Dorsolateral prefrontal cortex (tissue), 120 donors: ENCODE measurements at regions of chr19 and their contacts with region 1.

Region 1: GRCh38 chr19:41397086-41398049 is at the starts of genes BCKDHA and EXOSC5:
- DNase-seq: peak; percentile 98 to 99 (median 99)
- H3K4me3 ChIP-seq: peak within 1 kb of the TSS; percentile 71 to 100 (median 97)
- H3K27ac ChIP-seq: peak within 1 kb of the TSS; percentile 79 to 99 (median 96)
- H3K27me3 ChIP-seq: no peaks in the 10 kb centered on the region
- CTCF ChIP-seq: peak in 30 of 56 donors; percentile 3 to 60 (median 22)
- total RNA-seq, gene BCKDHA: 7.7 to 38.9 (median 20.1) TPM
- total RNA-seq, gene EXOSC5: 11.5 to 29.1 (median 18.2) TPM

Region 2: GRCh38 chr19:41263850-41264580 is 133.4 kb before region 1 on chr19 and contains the start of gene HNRNPUL1:
- intact Hi-C with region 1: loop called in 1 of 2 experiments (anchors 1 kb)
- DNase-seq: peak; percentile 96 to 99 (median 98)
- H3K4me3 ChIP-seq: peak within 1 kb of the TSS; percentile 67 to 100 (median 97)
- H3K27ac ChIP-seq: peak within 1 kb of the TSS; percentile 87 to 100 (median 98)
- H3K27me3 ChIP-seq: no peaks in the 10 kb centered on the region
- CTCF ChIP-seq: peak in 40 of 56 donors; percentile 13 to 54 (median 32)
- total RNA-seq, gene HNRNPUL1: 92.7 to 156 (median 118) TPM

Region 3: GRCh38 chr19:41278478-41278877 is 118.9 kb before region 1 on chr19:
- intact Hi-C with region 1: no loop called
- DNase-seq: no peak
- H3K4me3 ChIP-seq: no peak overlapping the region
- H3K27ac ChIP-seq: no peak overlapping the region
- H3K27me3 ChIP-seq: no peaks in the 10 kb centered on the region
- CTCF ChIP-seq: no peak

Region 4: GRCh38 chr19:41363753-41364523 is 33.4 kb before region 1 on chr19 and contains the start of gene B9D2:
- intact Hi-C with region 1: loop called (anchors 1 to 2 kb)
- DNase-seq: peak; percentile 95 to 98 (median 98)
- H3K4me3 ChIP-seq: peak within 1 kb of the TSS; percentile 52 to 98 (median 82)
- H3K27ac ChIP-seq: peak within 1 kb of the TSS; percentile 80 to 100 (median 98)
- H3K27me3 ChIP-seq: no peaks in the 10 kb centered on the region
- CTCF ChIP-seq: peak in 13 of 56 donors; percentile 6 to 42 (median 27)
- total RNA-seq, gene B9D2: 3.0 to 12.9 (median 6.6) TPM

Region 5: GRCh38 chr19:41431426-41432386 is 34.3 kb after region 1 on chr19:
- intact Hi-C with region 1: loop called (anchors 5 kb)
- DNase-seq: peak in 2 of 10 donors; percentile 17 to 26
- H3K4me3 ChIP-seq: no peak overlapping the region
- H3K27ac ChIP-seq: peak overlapping the region in 18 of 59 donors; percentile 3 to 49 (median 25)
- H3K27me3 ChIP-seq: no peaks in the 10 kb centered on the region
- CTCF ChIP-seq: peak in 36 of 56 donors; percentile 8 to 44 (median 26)

Region 6: DNA sequence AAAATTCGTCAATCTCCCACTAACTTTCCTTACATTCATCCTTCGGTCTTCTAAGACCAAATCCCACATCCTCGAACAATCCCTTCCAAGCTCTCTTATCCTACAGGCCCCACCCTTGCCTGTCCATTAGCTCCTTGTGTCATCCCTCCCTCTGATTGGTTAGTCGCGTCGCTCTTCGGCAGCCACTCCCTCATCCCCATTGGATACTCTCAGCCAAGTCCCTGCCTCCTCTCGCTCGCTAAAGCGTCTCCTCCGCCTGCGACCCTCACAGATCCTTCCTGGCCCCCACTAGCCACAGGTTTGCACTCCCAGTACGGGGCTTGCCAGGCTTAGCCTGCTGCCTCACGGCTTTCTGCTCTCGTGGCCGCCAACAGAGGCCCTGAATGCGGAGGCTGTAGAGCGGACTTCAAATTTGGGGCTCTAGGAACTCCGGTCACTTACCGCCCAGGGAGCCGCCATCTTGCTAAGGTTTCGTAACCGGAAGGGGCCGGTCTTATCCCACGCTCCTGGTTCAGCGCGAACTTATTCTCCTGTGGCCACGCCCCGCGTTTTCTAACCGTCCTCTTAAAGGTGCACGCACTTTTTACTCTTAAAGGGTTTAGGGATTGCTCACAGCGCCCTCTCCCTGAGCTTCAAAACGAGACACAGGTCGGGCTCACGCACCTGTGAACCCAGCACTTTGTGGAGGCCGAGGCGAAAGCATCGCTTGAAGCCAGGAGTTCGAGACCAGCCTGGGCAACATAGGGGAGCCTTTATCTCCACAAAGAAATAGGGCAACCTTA is 42.3 kb after region 1 on chr19 and contains the start of gene DMAC2:
- intact Hi-C with region 1: loop called (anchors 5 kb)
- DNase-seq: peak; percentile 89 to 98 (median 97)
- H3K4me3 ChIP-seq: peak within 1 kb of the TSS; percentile 37 to 96 (median 84)
- H3K27ac ChIP-seq: peak within 1 kb of the TSS; percentile 68 to 99 (median 94)
- H3K27me3 ChIP-seq: peaks cover 0 to 8% (median 0%) of the 10 kb centered on the region in 45 donors
- CTCF ChIP-seq: peak in 54 of 56 donors; percentile 13 to 69 (median 50)
- total RNA-seq, gene DMAC2: 29.5 to 57.2 (median 42.7) TPM

Region 7: DNA sequence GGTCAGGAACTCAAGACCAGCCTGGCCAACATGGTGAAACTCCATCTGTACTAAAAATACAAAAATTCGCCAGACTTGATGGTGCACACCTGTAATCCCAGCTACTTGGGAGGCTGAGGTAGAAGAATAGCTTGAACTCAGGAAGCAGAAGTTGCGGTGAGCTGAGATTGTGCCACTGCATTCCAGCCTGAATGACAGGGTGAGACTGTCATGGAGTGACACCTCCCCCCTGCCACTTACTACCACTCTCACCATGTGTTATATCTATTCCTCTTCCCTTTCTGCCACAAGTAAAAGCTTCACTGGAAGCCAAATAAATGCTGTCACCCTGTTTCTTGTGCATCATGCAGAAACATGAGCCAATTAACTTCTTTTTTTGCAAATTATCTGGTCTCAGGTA is 240.1 kb after region 1 on chr19:
- intact Hi-C with region 1: no loop called
- DNase-seq: no peak
- H3K4me3 ChIP-seq: no peak overlapping the region
- H3K27ac ChIP-seq: no peak overlapping the region
- H3K27me3 ChIP-seq: peaks cover 0 to 59% (median 28%) of the 10 kb centered on the region in 45 donors
- CTCF ChIP-seq: no peak